AG04450 (cell line): ENCODE measurements at regions of chr3 and their contacts with region 1.

Region 1: GRCh38 chr3:169149349-169149890 is 514.1 kb downstream of the MECOM start:
- DNase-seq: peak; percentile 62
- H3K4me3 ChIP-seq: peak overlapping the region; percentile 63
- H3K27ac ChIP-seq: peak overlapping the region; percentile 49
- H3K27me3 ChIP-seq: no peaks in the 10 kb centered on the region
- CTCF ChIP-seq: peak; percentile 85

Region 2: GRCh38 chr3:168865022-168865551 is 284.3 kb before region 1 on chr3:
- CTCF ChIA-PET with region 1: interaction called, 19 read pairs
- POLR2A ChIA-PET with region 1: no interaction called
- DNase-seq: no peak
- H3K4me3 ChIP-seq: no peak overlapping the region
- H3K27ac ChIP-seq: no peak overlapping the region
- H3K27me3 ChIP-seq: no peaks in the 10 kb centered on the region
- CTCF ChIP-seq: peak; percentile 81

Region 3: DNA sequence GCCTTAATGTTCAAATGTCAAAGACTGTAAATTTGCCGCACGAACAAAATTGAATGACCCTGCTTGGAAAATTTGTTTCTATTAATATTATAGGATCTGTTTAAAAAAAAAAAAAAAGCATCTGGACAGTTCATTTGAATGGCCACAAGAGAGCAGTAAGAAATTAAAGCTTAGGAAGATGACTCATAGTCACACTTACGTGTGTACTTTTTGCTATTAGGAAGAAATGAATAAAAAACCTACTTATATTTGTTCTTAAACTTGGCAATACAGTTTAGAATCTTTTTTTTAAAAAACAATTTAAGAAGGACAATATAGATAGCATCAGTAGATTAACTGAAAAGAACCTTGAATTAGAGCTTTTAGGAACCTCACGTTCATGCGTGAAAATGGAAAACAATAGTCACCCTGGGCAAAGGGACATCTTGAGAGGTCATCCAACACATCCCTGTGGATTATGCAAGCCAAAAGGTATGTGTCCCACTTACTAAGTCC is 107.7 kb before region 1 on chr3:
- CTCF ChIA-PET with region 1: interaction called, 54 read pairs
- POLR2A ChIA-PET with region 1: no interaction called
- DNase-seq: no peak
- H3K4me3 ChIP-seq: no peak overlapping the region
- H3K27ac ChIP-seq: no peak overlapping the region
- H3K27me3 ChIP-seq: no peaks in the 10 kb centered on the region
- CTCF ChIP-seq: peak; percentile 66

Region 4: DNA sequence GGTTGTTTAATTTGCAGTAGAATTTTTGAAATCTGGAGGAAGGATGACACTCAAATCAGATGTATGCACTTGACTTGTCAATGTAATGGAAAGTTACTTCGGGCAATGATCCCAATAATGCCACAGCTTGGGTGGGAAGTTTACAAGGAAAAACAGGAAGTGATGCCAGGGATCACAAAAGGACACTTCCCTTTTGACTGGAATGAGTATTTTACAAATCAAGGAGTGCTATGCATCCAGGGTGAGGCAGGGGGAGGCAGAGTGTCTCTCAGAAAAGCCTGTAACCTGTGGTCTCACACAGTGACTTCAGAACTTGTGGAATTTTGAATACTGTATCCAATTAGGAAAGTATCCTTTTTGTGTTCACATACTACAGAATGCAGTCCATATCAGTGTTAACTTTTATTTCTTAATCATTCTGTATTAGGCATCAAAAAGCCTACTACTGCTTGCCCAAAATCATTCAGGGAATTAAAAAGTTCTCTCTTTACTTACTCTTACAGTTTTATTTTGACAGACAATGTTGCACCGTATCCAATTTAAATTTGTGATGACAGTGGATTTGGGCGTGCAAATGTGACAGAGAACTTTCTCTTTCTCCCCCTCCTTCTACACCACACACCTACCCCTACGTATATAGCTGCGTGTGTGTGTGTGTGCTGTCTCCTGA is 69.0 kb after region 1 on chr3:
- CTCF ChIA-PET with region 1: interaction called, 16 read pairs
- POLR2A ChIA-PET with region 1: no interaction called
- DNase-seq: no peak
- H3K4me3 ChIP-seq: no peak overlapping the region
- H3K27ac ChIP-seq: no peak overlapping the region
- H3K27me3 ChIP-seq: no peaks in the 10 kb centered on the region
- CTCF ChIP-seq: peak; percentile 88

Region 5: DNA sequence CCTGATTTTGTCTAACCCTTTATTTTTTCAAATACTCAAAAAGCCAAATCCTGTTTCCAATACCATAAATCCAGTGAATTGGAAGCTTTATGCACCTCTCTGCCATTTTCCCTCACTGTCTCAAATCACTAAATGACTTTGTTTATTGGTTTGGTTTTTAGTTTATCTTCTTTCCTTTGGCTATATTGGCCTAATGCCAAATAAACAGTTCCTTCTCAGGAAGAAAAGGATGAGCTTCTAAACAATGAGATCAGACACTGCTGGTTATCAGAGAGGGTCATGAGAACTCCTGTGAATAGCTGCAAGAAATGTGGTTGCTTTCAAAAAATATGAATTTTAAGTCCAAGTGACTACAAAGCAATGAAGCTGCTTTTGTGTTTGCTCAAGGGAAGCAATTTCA is 154.2 kb after region 1 on chr3:
- CTCF ChIA-PET with region 1: interaction called, 12 read pairs
- POLR2A ChIA-PET with region 1: interaction called, 5 read pairs
- DNase-seq: no peak
- H3K4me3 ChIP-seq: no peak overlapping the region
- H3K27ac ChIP-seq: no peak overlapping the region
- H3K27me3 ChIP-seq: no peaks in the 10 kb centered on the region
- CTCF ChIP-seq: no peak

Region 6: DNA sequence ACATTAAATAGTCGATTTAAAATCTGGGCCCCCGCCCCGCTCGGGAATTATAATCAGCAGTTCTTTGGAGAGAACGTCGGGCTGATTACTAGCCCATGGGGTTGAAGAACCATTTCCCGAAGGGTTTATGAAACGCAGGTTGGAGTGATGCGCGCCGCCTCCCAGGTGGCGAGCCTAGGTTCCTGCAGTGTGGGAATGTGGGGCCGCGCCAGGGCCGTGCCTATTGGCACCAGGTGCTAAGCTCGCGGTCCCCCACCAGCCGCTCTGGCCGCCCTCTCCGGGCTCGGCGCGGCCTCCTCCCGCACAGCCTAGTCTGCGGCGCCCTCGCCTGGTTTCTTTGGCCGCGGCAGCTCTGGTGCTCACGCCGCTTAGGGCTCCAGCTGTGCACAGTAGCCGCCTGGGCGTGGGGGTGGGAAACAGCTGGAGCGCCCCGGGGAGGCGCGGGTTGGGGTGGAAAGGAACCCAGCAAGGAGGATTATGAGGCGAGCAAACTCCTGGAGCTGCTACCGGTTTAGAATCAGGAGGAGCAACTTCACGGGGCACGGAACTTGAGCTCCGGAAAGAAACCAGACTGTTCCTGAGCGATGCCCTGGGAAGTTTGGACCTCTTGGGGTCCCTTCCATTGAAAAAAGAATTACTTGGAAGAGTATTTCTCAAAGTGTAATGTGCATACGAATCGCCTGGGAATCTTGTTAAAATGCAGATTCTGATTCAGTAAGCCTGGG is 519.7 kb after region 1 on chr3:
- CTCF ChIA-PET with region 1: interaction called, 84 read pairs
- POLR2A ChIA-PET with region 1: no interaction called
- DNase-seq: no peak
- H3K4me3 ChIP-seq: peak overlapping the region; percentile 55
- H3K27ac ChIP-seq: no peak overlapping the region
- H3K27me3 ChIP-seq: peaks cover 58% of the 10 kb centered on the region
- CTCF ChIP-seq: peak; percentile 74